Activated CD8-positive, alpha-beta memory T cell treated with anti-CD3 and anti-CD28 coated beads, Interleukin-2, amount 10 ng/mL, durations not matched to agents 7 days and 5 days (primary cell): ENCODE measurements at regions of chr14 and their contacts with region 1.

Region 1: GRCh38 chr14:64012003-64012402 is 159.2 kb downstream of the SYNE2 start:
- DNase-seq: no peak
- ATAC-seq: no peak
- H3K4me3 Mint-ChIP-seq: no peak overlapping the region
- H3K27ac Mint-ChIP-seq: no peak overlapping the region
- H3K4me1 Mint-ChIP-seq: no peaks in the 10 kb centered on the region
- H3K27me3 Mint-ChIP-seq: no peaks in the 10 kb centered on the region

Region 2: DNA sequence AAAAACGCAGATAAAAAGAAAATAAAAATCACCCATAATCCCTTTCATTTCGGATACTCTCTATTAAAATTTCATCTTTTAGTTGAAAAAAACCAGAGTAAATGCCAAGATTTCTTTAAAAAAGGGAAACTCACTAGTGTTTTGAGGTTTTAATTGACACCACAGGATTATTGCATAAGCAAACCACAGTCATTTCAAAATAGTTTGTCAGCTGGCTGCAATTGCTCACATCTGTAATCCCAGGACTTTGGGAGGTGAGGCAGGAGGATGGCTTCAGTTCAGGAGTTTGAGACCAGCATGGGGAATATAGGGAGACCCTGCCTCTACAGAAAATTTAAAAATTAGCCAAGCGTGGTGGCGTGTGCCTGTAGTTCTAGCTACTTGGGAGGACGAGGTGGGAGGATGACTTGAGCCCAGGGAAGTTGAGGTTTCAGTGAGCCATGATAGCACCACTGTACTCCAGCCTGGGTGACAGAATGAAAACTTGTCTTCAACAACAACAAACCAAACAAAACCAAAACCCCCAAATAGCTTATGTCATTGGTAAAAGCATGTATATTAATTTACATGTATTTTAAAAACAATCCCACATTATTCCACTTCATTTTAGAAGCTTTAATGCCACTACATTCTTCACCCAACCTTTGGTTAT is 110.4 kb before region 1 on chr14:
- CTCF ChIA-PET with region 1: no interaction called
- DNase-seq: no peak
- ATAC-seq: no peak
- H3K4me3 Mint-ChIP-seq: no peak overlapping the region
- H3K27ac Mint-ChIP-seq: no peak overlapping the region
- H3K4me1 Mint-ChIP-seq: peaks cover 25% of the 10 kb centered on the region
- H3K27me3 Mint-ChIP-seq: no peaks in the 10 kb centered on the region

Region 3: GRCh38 chr14:64294672-64295413 is 282.8 kb after region 1 on chr14:
- CTCF ChIA-PET with region 1: interaction called, 10 read pairs
- DNase-seq: peak; percentile 90
- ATAC-seq: peak; percentile 88
- H3K4me3 Mint-ChIP-seq: peak overlapping the region; percentile 60
- H3K27ac Mint-ChIP-seq: peak overlapping the region; percentile 8
- H3K4me1 Mint-ChIP-seq: peaks cover 30% of the 10 kb centered on the region
- H3K27me3 Mint-ChIP-seq: peaks cover 36% of the 10 kb centered on the region